Panc1 (cell line): ENCODE measurements at regions of chr7 and their contacts with region 1.

Region 1: GRCh38 chr7:116929914-116930913 is 23.1 kb upstream of the ST7 start:
- DNase-seq: peak; percentile 79
- ATAC-seq: peak; percentile 95
- H3K4me3 ChIP-seq: peak overlapping the region in 1 of 2 experiments; percentile 25; a peak in 1 of 4 replicates
- H3K27ac ChIP-seq: no peak overlapping the region
- H3K4me1 ChIP-seq: 0 out of 2 replicates have a peak, but pooled peaks cover 2% of the 10 kb centered on the region
- H3K27me3 ChIP-seq: no peaks in the 10 kb centered on the region
- CTCF ChIP-seq: peak; percentile 93

Region 2: GRCh38 chr7:116984917-116985316 is 54.7 kb after region 1 on chr7:
- CTCF ChIA-PET with region 1: interaction called, 3 read pairs
- POLR2A ChIA-PET with region 1: no interaction called
- in situ Hi-C with region 1: no loop called
- intact Hi-C with region 1: loop called (anchors 5 kb)
- DNase-seq: no peak
- ATAC-seq: peak; percentile 79
- H3K4me3 ChIP-seq: no peak overlapping the region
- H3K27ac ChIP-seq: no peak overlapping the region
- H3K4me1 ChIP-seq: no peaks in the 10 kb centered on the region; the same call in 1 of the 2 replicates
- H3K27me3 ChIP-seq: no peaks in the 10 kb centered on the region
- CTCF ChIP-seq: peak; percentile 77; the same call in 1 of the 2 replicates

Region 3: GRCh38 chr7:117165656-117166055 is 235.4 kb after region 1 on chr7:
- CTCF ChIA-PET with region 1: no interaction called
- POLR2A ChIA-PET with region 1: no interaction called
- in situ Hi-C with region 1: no loop called
- intact Hi-C with region 1: no loop called
- DNase-seq: no peak
- ATAC-seq: no peak
- H3K4me3 ChIP-seq: no peak overlapping the region
- H3K27ac ChIP-seq: no peak overlapping the region
- H3K4me1 ChIP-seq: no peaks in the 10 kb centered on the region
- H3K27me3 ChIP-seq: no peaks in the 10 kb centered on the region
- CTCF ChIP-seq: no peak